Caco-2 (cell line): ENCODE measurements at regions of chr20 and their contacts with region 1.

Region 1: DNA sequence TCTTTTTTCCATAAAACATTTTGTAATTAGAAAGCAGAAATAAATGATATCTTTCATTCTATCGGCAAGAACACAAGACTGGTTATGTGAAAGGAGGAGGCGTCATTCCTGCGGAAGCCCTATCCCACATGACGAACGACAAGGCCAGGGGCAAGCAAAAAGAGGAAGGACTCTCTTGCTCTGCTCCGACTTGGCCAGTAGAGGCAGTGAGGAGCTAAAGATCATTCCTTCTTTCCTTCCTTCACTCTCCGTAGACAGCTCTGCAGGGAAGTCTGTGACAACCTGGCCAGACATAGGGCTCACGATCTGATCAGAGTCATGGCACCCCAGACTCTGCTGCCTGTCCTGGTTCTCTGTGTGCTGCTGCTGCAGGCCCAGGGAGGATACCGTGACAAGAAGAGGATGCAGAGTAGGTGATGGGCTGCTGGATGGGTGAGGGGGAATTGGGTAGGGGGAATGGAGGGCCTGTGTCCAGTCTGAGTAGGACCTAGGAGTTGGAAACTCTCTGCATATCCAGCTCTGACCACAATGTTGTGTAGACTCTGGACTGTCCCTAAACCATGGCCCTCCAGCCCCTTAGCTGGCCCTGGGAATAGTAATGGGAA is at the start of gene WFDC10A:
- DNase-seq: peak; percentile 81 to 84
- H3K4me3 ChIP-seq: no peak within 1 kb of the TSS
- H3K4me3 Mint-ChIP-seq: no peak within 1 kb of the TSS
- H3K27ac Mint-ChIP-seq: no peak within 1 kb of the TSS
- H3K4me1 ChIP-seq: no peaks in the 10 kb centered on the region
- H3K4me1 Mint-ChIP-seq: no peaks in the 10 kb centered on the region
- H3K27me3 ChIP-seq: no peaks in the 10 kb centered on the region
- H3K27me3 Mint-ChIP-seq: peaks cover 12% of the 10 kb centered on the region
- CTCF ChIP-seq: peak; percentile 90 to 99
- total RNA-seq, gene WFDC10A: not detected in 2 replicates

Region 2: GRCh38 chr20:45311589-45312211 is 317.9 kb before region 1 on chr20:
- CTCF ChIA-PET with region 1: no interaction called
- POLR2A ChIA-PET with region 1: no interaction called
- intact Hi-C with region 1: loop called (anchors 10 kb)
- DNase-seq: peak; percentile 81 to 84
- H3K4me3 ChIP-seq: no peak overlapping the region
- H3K4me3 Mint-ChIP-seq: no peak overlapping the region
- H3K27ac Mint-ChIP-seq: no peak overlapping the region
- H3K4me1 ChIP-seq: no peaks in the 10 kb centered on the region
- H3K4me1 Mint-ChIP-seq: peaks cover 8% of the 10 kb centered on the region
- H3K27me3 ChIP-seq: no peaks in the 10 kb centered on the region; the same call in 1 of the 2 replicates
- H3K27me3 Mint-ChIP-seq: peaks cover 3% of the 10 kb centered on the region
- CTCF ChIP-seq: peak; percentile 91 to 94

Region 3: DNA sequence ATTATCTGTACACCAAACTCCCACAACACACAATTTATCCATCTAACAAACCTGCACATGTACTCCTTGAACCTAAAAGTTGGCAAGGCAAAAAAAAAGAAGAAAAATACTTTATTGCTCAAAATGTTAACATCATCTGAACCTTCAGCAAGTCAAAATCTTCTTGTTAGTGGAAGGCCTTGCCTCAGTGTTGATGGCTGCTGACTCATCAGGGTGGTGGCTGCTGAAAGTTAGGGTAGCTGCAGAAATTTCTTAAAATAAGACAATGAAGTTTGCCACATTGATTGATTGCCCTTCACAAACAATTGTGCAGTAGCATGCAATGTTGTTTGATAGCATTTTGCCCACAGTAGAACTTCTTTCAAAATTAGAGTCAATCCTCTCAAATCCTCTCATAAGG is 43.2 kb after region 1 on chr20:
- CTCF ChIA-PET with region 1: no interaction called
- POLR2A ChIA-PET with region 1: no interaction called
- intact Hi-C with region 1: loop called (anchors 10 kb)
- DNase-seq: no peak
- H3K4me3 ChIP-seq: no peak overlapping the region
- H3K4me3 Mint-ChIP-seq: no peak overlapping the region
- H3K27ac Mint-ChIP-seq: no peak overlapping the region
- H3K4me1 ChIP-seq: no peaks in the 10 kb centered on the region
- H3K4me1 Mint-ChIP-seq: no peaks in the 10 kb centered on the region
- H3K27me3 ChIP-seq: no peaks in the 10 kb centered on the region
- H3K27me3 Mint-ChIP-seq: peaks cover 23% of the 10 kb centered on the region
- CTCF ChIP-seq: no peak

Region 4: GRCh38 chr20:45742581-45742980 is 113.0 kb after region 1 on chr20:
- CTCF ChIA-PET with region 1: interaction called, 4 read pairs
- POLR2A ChIA-PET with region 1: no interaction called
- intact Hi-C with region 1: loop called (anchors 10 kb)
- DNase-seq: no peak
- H3K4me3 ChIP-seq: no peak overlapping the region
- H3K4me3 Mint-ChIP-seq: no peak overlapping the region
- H3K27ac Mint-ChIP-seq: no peak overlapping the region
- H3K4me1 ChIP-seq: no peaks in the 10 kb centered on the region
- H3K4me1 Mint-ChIP-seq: no peaks in the 10 kb centered on the region
- H3K27me3 ChIP-seq: no peaks in the 10 kb centered on the region
- H3K27me3 Mint-ChIP-seq: peaks cover 12% of the 10 kb centered on the region
- CTCF ChIP-seq: no peak